ENCODE measurements at regions of chr7 and their contacts with region 1.

Region 1: GRCh38 chr7:75756991-75757676 is 14.9 kb downstream of the CCL26 start:
- DNase-seq: no peak
- ATAC-seq: peak; percentile 64 to 80 (median 74)
- H3K4me3 ChIP-seq: no peak overlapping the region
- H3K27ac ChIP-seq: no peak overlapping the region
- H3K4me1 ChIP-seq: no peaks in the 10 kb centered on the region
- H3K27me3 ChIP-seq: no peaks in the 10 kb centered on the region
- CTCF ChIP-seq: peak; percentile 39 to 51 (median 44)
- POLR2A ChIP-seq: no peak

Region 2: GRCh38 chr7:75642810-75643486 is 114.2 kb before region 1 on chr7:
- intact Hi-C with region 1: loop called in 1 of 2 experiments (anchors 10 kb)
- DNase-seq: peak in 2 of 3 donors; percentile 40 to 68
- ATAC-seq: peak; percentile 72 to 83 (median 80)
- H3K4me3 ChIP-seq: no peak overlapping the region
- H3K27ac ChIP-seq: no peak overlapping the region
- H3K4me1 ChIP-seq: no peaks in the 10 kb centered on the region
- H3K27me3 ChIP-seq: no peaks in the 10 kb centered on the region
- CTCF ChIP-seq: peak; percentile 69 to 85 (median 76)
- POLR2A ChIP-seq: no peak